Activated B cell treated with CpG ODN at 0.5 μM for 24 hours (primary cell): ENCODE measurements at regions of chr10 and their contacts with region 1.

Region 1: DNA sequence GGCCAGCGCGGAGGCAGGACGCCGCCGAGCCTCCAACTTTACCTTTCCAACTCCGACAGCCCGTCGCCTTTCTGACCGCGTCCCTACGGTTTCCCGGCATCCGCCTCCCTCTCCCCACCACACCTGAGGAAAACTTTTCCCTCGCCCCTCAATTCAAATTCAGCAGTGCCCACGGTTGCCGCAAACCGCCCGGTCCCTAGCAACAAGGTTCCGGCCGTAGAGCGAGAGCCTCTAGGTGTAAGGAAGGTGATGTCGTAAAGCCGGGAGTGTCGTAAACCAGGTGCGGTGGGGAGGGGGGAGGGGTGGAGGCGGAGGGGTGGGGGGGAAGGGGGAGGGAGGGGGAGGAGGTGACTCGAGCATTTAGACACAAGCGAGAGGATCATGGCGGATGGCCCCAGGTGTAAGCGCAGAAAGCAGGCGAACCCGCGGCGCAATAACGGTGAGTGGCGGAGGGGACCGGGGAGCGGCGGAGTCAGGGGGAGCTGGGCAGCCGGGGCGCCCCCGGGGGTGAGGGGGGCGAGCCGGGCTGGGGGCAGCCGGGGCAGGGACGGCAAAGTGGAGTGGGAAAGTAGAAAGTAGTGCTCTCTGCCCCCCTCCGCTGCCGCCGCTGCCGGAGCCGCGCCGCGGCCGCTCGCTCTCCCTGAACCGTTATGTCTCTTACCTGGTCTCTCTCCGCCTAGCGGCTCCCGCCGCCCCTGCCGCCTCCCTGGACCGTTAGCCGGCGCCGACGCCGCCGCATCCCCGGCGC is at the start of gene ZEB1:
- DNase-seq: peak; percentile 80
- ATAC-seq: peak; percentile 53
- H3K4me3 Mint-ChIP-seq: peak within 1 kb of the TSS; percentile 96
- H3K27ac Mint-ChIP-seq: peak within 1 kb of the TSS; percentile 98
- H3K4me1 Mint-ChIP-seq: peaks cover 34% of the 10 kb centered on the region
- H3K27me3 Mint-ChIP-seq: no peaks in the 10 kb centered on the region
- CTCF ChIP-seq: no peak
- total RNA-seq, gene ZEB1: 38.4 and 43.0 TPM in 2 replicates

Region 2: DNA sequence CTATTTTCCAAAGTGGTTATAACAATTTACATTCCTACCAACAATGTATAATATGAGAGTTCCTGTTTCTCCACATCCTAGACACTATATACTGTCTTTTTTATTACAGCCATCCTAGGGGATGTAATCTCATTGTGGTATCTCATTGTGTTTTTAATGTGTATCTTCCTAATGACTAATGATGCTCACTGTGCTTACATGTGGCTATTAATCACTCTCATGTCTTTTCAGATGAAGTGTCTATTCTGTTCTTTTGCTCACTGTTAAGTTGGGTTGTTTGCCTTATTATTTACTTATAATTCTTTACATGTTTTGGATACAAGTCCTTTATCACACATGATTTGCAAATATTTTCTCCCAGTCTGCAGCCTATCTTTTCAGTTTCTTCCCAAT is 359.2 kb before region 1 on chr10:
- CTCF ChIA-PET with region 1: no interaction called
- POLR2A ChIA-PET with region 1: interaction called, 5 read pairs
- intact Hi-C with region 1: loop called (anchors 1 kb)
- DNase-seq: no peak
- ATAC-seq: peak; percentile 14
- H3K4me3 Mint-ChIP-seq: peak overlapping the region; percentile 50
- H3K27ac Mint-ChIP-seq: no peak overlapping the region
- H3K4me1 Mint-ChIP-seq: peaks cover 27% of the 10 kb centered on the region
- H3K27me3 Mint-ChIP-seq: no peaks in the 10 kb centered on the region
- CTCF ChIP-seq: no peak

Region 3: DNA sequence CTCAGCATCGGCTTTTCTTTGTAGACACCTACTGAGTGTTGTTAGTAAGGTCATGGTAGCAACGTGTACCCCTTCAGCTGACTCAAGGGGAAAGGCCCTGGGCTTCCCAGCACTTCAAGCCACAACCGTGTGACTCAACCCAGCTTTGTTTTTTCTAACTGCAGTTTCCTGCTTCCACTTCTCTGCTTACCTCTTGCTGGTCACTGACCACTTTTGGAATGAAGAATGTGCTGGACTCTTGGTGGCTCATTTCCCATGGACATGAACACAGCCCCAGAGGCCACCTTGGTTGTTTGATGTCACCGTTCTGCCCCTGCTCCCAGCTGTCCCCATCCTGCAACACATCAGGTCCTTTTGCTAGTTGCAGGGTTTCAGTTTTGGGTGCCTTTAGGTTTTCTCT is 217.9 kb before region 1 on chr10:
- CTCF ChIA-PET with region 1: no interaction called
- POLR2A ChIA-PET with region 1: interaction called, 12 read pairs
- intact Hi-C with region 1: no loop called
- DNase-seq: no peak
- ATAC-seq: peak; percentile 91
- H3K4me3 Mint-ChIP-seq: no peak overlapping the region
- H3K27ac Mint-ChIP-seq: peak overlapping the region; percentile 59
- H3K4me1 Mint-ChIP-seq: peaks cover 21% of the 10 kb centered on the region
- H3K27me3 Mint-ChIP-seq: peaks cover 2% of the 10 kb centered on the region
- CTCF ChIP-seq: no peak

Region 4: DNA sequence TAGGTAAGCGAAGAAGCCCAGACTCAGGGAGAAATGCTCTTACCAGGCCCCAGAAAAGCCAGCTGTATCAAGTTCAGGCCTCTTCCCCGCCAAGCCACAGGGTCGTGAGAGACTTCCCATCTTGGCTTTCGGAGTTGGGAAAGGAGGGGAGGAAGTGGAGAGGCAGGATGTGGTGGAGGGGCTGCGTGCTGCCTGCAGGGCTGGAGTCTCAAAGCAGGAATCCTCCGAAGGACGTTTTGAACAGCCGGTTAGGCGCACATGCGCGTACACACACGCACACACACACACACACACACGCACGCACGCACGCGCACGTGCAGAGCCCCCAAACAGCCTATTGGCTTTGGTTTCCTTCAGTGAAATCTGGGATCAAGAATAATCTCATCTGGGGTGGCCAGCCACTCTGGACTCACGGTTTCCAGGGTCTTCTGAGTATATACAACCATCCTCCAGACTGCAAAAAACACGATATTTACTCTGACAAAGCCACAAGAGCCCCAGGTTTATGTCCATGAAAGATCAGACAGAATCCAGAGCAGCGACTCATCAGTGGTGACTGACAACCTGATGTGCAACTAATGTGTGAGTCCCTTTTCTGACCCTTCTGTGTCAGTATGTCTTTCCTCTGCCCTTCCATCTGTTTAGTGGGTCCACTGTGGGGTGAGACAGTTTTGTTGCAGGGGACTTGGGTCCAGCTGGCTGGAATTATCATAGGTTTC is 172.4 kb before region 1 on chr10:
- CTCF ChIA-PET with region 1: no interaction called
- POLR2A ChIA-PET with region 1: no interaction called
- intact Hi-C with region 1: no loop called
- DNase-seq: no peak
- ATAC-seq: no peak
- H3K4me3 Mint-ChIP-seq: no peak overlapping the region
- H3K27ac Mint-ChIP-seq: no peak overlapping the region
- H3K4me1 Mint-ChIP-seq: peaks cover 4% of the 10 kb centered on the region
- H3K27me3 Mint-ChIP-seq: peaks cover 10% of the 10 kb centered on the region
- CTCF ChIP-seq: no peak

Region 5: GRCh38 chr10:31383810-31384588 is 65.0 kb after region 1 on chr10:
- CTCF ChIA-PET with region 1: no interaction called
- POLR2A ChIA-PET with region 1: no interaction called
- intact Hi-C with region 1: loop called (anchors 2 kb)
- DNase-seq: no peak
- ATAC-seq: peak; percentile 86
- H3K4me3 Mint-ChIP-seq: peak overlapping the region; percentile 47
- H3K27ac Mint-ChIP-seq: peak overlapping the region; percentile 65
- H3K4me1 Mint-ChIP-seq: peaks cover 22% of the 10 kb centered on the region
- H3K27me3 Mint-ChIP-seq: no peaks in the 10 kb centered on the region
- CTCF ChIP-seq: no peak

Region 6: DNA sequence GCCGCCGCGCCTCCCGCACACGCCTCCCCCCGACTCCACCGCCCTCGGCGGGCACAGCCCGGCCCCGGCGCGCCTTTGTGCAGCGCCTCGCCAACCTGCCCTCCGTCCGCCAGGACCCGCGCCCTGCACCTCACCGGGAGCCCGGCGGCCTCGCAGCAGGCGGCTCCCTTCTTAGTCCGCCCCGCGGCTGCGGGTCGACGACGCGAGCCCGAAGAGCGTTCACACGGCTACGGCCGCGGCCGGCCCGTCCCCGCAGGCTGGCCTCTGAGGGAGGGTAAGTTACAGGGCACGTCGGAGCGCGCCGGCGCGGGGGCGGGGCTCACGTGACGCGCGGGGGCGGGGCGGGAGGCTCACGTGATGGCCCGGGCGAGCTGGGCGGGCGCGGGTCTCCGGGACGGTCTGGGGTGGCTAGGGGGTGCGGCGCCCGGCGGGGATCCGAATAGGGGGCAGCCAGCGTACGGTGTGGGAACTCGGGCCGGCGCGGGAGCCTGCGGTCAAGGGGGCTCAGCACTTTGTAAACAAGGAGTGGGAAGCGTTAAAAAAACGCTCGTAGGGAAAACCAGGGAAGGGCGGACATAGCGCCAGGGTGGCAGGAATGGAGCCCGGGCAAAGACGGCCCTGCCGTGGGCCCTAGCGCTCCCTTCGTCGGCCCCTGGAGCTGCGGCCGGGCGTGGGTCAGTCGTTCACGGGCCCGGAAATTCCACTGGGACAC is 609.7 kb after region 1 on chr10 and contains the start of gene ARHGAP12:
- CTCF ChIA-PET with region 1: no interaction called
- POLR2A ChIA-PET with region 1: no interaction called
- intact Hi-C with region 1: loop called (anchors 1 kb)
- DNase-seq: peak; percentile 97
- ATAC-seq: peak; percentile 74
- H3K4me3 Mint-ChIP-seq: peak within 1 kb of the TSS; percentile 91
- H3K27ac Mint-ChIP-seq: peak within 1 kb of the TSS; percentile 88
- H3K4me1 Mint-ChIP-seq: peaks cover 44% of the 10 kb centered on the region
- H3K27me3 Mint-ChIP-seq: no peaks in the 10 kb centered on the region
- CTCF ChIP-seq: no peak
- total RNA-seq, gene ARHGAP12: 23.2 and 27.3 TPM in 2 replicates

Region 7: DNA sequence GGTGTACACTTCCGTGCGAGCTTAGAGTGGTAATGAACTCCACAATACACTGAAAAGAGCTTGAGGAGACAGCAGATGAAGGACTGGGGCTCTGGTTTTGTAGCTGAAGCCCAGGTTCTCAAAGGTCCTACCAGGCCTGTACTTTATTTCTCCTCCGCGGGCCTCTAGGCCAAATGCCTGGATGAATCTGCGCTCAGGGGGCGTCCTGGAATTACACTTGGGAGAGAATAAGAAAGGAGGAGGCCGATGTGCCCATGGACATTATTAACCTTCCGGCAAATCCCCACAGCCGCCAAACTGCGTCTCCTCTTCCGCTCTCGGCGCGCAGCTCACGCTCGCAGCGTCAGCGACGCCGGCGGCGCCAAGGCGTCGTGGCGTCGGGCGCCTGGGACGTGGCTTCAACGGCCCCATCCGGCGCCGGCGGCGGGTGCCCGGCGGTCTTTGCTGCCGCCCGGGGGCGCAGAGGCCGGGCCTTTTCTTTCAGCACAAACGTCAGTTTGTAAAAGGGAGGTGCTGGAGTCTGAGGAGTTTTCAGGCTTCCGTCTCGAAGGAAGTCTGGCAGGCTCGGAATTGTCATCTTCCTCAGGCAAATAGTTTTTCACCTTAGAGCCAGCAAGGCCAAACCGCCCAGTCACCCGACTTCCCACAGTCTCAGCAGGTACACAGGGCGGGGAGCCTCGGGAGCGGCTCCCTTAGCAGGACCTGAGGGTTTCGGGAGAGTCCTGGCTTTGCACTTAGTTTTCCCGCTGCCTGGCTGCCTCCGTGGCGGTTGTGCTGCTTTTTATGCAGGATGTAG is 1126.9 kb after region 1 on chr10 and contains the start of gene CCDC7:
- CTCF ChIA-PET with region 1: no interaction called
- POLR2A ChIA-PET with region 1: interaction called, 3 read pairs
- intact Hi-C with region 1: loop called (anchors 10 kb)
- DNase-seq: peak; percentile 83
- ATAC-seq: peak; percentile 98
- H3K4me3 Mint-ChIP-seq: peak within 1 kb of the TSS; percentile 98
- H3K27ac Mint-ChIP-seq: peak within 1 kb of the TSS; percentile 99
- H3K4me1 Mint-ChIP-seq: peaks cover 15% of the 10 kb centered on the region
- H3K27me3 Mint-ChIP-seq: peaks cover 6% of the 10 kb centered on the region
- CTCF ChIP-seq: no peak
- total RNA-seq, gene CCDC7: 16.8 and 20.0 TPM in 2 replicates